CD4-positive, alpha-beta memory T cell (primary cell): ENCODE measurements at regions of chr12 and their contacts with region 1.

Region 1: DNA sequence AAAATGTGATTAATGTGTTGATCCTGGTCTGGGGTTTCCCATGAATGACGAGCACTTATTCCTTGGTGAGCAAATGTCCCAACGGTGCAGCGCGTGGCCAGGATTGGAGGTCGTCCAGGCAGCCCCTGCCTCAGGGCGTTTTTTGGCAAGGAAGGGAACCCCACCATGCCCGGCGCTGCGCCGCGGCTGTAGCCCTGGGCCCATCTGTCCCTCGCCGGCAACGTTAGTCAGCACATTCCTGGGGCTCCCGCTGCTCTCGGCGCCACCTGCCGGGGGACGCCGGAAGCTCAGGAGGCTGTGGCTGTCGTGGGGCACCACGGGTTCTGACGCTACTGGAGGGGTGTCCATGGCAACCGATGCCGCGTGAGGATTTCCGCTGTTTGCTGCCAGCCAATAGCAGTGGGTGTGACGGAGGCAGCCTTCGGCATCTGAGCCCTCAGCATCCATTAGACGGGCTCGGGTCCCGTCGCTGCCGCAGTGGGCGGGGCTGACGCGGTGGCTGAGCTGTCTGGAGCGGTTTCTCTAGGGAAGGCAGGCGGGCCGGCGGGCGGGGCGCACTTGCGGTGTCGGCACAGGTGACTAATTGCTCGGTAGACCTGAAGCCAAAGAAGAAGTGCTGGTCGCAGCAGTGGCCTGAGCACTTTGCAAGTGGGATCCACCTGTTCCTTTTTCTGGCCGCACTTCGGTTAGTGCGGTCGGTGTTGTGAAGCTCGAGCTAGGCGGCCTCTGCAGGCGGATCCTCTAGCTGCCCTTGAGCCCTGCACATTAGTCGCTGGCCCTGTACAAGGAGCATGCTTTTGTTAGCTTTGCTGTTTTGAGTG is 29.5 kb downstream of the RAB35 start:
- DNase-seq: peak; percentile 99 to 100 (median 100)
- H3K4me3 ChIP-seq: peak overlapping the region; percentile 49 to 52
- H3K4me3 Mint-ChIP-seq: peak overlapping the region; percentile 69 to 86 (median 83)
- H3K27ac ChIP-seq: peak overlapping the region; percentile 58
- H3K27ac Mint-ChIP-seq: peak overlapping the region; percentile 92 to 95 (median 93)
- H3K4me1 ChIP-seq: peaks cover 12% of the 10 kb centered on the region
- H3K4me1 Mint-ChIP-seq: peaks cover 7 to 26% (median 18%) of the 10 kb centered on the region in 4 donors
- H3K27me3 ChIP-seq: no peaks in the 10 kb centered on the region
- H3K27me3 Mint-ChIP-seq: no peaks in the 10 kb centered on the region

Region 2: DNA sequence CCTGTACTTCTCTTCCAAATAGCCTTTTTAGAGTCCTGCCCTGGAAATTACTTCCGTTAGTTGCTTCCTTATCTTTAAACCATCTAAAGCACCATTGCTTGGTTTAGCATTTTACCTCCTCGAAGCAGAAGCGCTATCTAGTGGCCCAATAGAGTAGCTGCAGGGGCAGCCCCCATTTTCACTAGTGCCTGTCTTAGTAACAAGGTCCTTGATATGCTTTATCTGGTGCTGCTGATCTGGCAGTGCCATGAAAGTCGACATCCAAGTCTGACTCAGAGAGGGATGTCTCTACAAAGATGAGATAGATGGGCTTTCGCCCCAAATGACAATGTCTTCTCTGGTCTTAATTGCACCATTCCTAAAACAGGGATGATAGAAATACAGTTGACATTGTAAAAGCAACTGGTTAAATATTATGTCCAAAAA is 184.9 kb before region 1 on chr12:
- CTCF ChIA-PET with region 1: no interaction called
- POLR2A ChIA-PET with region 1: no interaction called
- intact Hi-C with region 1: loop called (anchors 1 kb)
- DNase-seq: peak; percentile 61 to 76 (median 67)
- H3K4me3 ChIP-seq: no peak overlapping the region
- H3K4me3 Mint-ChIP-seq: no peak overlapping the region
- H3K27ac ChIP-seq: no peak overlapping the region
- H3K27ac Mint-ChIP-seq: no peak overlapping the region
- H3K4me1 ChIP-seq: no peaks in the 10 kb centered on the region
- H3K4me1 Mint-ChIP-seq: peaks cover 4 to 7% (median 5%) of the 10 kb centered on the region in 4 donors
- H3K27me3 ChIP-seq: no peaks in the 10 kb centered on the region
- H3K27me3 Mint-ChIP-seq: peaks cover 0 to 4% of the 10 kb centered on the region in 2 donors

Region 3: DNA sequence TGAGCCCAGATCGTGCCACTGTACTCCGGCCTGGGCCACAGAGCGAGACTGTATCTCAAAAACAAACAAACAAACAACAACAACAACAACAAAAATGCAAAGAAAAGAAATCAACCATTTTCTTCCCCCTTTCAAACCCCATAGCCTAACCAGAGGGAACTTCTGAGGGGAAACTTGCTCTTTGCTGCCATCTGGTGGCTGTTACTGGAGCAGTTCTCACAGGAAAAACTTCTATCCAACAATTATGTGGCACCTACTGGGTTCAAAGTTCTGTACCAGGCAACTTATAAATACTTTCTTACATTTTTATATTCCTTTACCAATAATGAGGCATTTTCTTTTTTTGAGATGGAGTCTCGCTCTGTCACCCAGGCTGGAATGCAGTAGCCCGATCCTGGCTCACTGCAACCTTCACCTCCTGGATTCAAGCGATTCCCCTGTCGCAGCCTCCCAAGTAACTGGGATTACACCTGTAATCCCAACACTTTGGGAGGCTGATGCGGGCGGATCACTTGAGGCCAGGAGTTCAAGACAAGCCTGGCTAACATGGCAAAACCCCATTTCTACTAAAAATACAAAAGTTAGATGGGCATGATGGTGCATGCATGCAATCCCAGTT is 148.9 kb before region 1 on chr12:
- CTCF ChIA-PET with region 1: interaction called, 10 read pairs
- POLR2A ChIA-PET with region 1: no interaction called
- intact Hi-C with region 1: loop called (anchors 1 kb)
- DNase-seq: peak; percentile 49 to 62 (median 52)
- H3K4me3 ChIP-seq: no peak overlapping the region
- H3K4me3 Mint-ChIP-seq: no peak overlapping the region
- H3K27ac ChIP-seq: no peak overlapping the region
- H3K27ac Mint-ChIP-seq: no peak overlapping the region
- H3K4me1 ChIP-seq: no peaks in the 10 kb centered on the region
- H3K4me1 Mint-ChIP-seq: peaks cover 0 to 2% (median 0%) of the 10 kb centered on the region in 4 donors
- H3K27me3 ChIP-seq: no peaks in the 10 kb centered on the region
- H3K27me3 Mint-ChIP-seq: peaks cover 0 to 2% of the 10 kb centered on the region in 2 donors

Region 4: GRCh38 chr12:120012067-120012621 is 74.9 kb before region 1 on chr12:
- CTCF ChIA-PET with region 1: interaction called, 8 read pairs
- POLR2A ChIA-PET with region 1: interaction called, 18 read pairs
- intact Hi-C with region 1: loop called (anchors 1 kb)
- DNase-seq: peak; percentile 82 to 99 (median 88)
- H3K4me3 ChIP-seq: peak overlapping the region; percentile 1 to 22
- H3K4me3 Mint-ChIP-seq: peak overlapping the region; percentile 63 to 89 (median 80)
- H3K27ac ChIP-seq: peak overlapping the region; percentile 95
- H3K27ac Mint-ChIP-seq: peak overlapping the region; percentile 95 to 100 (median 99)
- H3K4me1 ChIP-seq: peaks cover 81% of the 10 kb centered on the region
- H3K4me1 Mint-ChIP-seq: peaks cover 58 to 88% (median 67%) of the 10 kb centered on the region in 4 donors
- H3K27me3 ChIP-seq: no peaks in the 10 kb centered on the region
- H3K27me3 Mint-ChIP-seq: no peaks in the 10 kb centered on the region

Region 5: DNA sequence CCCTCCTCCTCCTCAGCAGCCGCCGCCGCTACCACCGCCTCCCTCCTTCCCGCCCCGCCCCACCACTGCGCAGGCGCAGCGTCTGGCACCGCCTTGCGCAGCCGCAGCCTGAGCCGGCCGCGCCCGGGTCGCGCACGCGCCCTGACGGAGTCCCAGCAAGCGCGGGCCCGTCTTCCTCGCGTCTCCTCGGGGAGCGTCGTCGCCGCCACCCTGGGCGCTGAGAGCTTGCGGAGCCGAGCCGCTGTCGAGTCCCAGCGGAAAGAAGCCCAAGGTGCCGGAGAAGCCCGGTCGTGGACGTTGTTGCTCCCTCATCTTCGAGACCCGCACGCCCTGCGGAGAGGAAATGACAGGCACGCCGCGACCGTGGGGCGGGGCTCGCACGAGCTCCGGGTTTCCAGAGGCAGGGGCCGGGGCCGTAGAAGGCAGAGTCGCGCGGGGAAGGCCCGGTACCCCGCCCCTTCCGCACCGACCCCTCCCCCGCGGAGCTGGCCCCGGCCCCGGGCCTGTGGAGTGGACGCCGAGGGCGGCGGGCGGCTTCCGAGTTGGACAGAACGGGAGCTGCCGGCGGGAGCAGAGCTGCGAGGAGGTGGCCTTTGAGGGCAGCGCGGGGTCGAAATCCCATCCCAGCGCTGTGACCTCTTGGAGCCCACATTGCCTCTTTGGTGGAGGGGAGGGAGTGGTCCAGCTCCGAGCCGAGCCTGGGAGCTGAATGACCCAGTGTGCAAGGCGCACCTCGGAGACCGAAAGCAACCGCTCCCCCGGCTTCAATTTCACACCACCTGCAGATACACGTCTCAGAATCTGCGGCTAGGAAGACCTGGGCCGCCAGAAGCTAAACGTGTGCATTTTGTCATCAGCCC is 30.0 kb after region 1 on chr12:
- CTCF ChIA-PET with region 1: interaction called, 11 read pairs
- POLR2A ChIA-PET with region 1: interaction called, 26 read pairs
- intact Hi-C with region 1: loop called (anchors 1 kb)
- DNase-seq: peak; percentile 95 to 99 (median 97)
- H3K4me3 ChIP-seq: peak overlapping the region; percentile 75 to 80
- H3K4me3 Mint-ChIP-seq: peak overlapping the region; percentile 86 to 98 (median 90)
- H3K27ac ChIP-seq: peak overlapping the region; percentile 83
- H3K27ac Mint-ChIP-seq: peak overlapping the region; percentile 85 to 99 (median 94)
- H3K4me1 ChIP-seq: peaks cover 84% of the 10 kb centered on the region
- H3K4me1 Mint-ChIP-seq: peaks cover 59 to 88% (median 76%) of the 10 kb centered on the region in 4 donors
- H3K27me3 ChIP-seq: no peaks in the 10 kb centered on the region
- H3K27me3 Mint-ChIP-seq: no peaks in the 10 kb centered on the region